ENCODE measurements at regions of chr12 and their contacts with region 1.

Region 1: DNA sequence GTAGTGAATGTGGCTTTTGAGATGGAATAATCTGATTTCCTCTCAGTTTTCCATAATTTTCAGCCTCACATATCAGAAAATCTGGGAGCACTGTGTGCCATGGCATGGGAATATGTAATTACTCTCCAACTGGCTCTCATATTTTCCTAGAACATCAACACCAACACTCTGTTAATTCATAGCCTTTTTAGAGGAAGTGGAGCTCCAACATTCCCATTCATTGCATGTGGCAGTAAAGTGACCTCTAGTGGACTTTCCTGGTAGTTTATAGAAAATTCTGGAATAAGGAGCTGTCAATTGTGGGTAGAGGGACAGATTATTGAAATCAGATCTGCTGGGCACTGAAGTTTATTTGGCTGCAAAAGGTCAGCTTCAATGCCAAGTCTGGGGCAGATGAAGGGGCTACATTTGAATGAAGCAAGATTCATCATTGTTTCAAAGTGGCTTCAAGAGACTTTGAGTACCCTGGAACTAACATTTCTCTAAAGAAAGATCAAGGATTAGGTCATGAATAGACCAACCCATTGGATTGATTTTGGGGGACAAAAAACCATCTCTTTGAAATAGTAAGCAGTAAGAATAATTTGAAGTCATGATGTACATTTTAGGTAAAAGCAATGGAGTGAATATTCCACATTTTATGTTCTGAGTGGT is 23.6 kb upstream of the USP44 start:
- DNase-seq: no peak
- H3K4me3 ChIP-seq: no peak overlapping the region
- CTCF ChIP-seq: peak; percentile 55

Region 2: DNA sequence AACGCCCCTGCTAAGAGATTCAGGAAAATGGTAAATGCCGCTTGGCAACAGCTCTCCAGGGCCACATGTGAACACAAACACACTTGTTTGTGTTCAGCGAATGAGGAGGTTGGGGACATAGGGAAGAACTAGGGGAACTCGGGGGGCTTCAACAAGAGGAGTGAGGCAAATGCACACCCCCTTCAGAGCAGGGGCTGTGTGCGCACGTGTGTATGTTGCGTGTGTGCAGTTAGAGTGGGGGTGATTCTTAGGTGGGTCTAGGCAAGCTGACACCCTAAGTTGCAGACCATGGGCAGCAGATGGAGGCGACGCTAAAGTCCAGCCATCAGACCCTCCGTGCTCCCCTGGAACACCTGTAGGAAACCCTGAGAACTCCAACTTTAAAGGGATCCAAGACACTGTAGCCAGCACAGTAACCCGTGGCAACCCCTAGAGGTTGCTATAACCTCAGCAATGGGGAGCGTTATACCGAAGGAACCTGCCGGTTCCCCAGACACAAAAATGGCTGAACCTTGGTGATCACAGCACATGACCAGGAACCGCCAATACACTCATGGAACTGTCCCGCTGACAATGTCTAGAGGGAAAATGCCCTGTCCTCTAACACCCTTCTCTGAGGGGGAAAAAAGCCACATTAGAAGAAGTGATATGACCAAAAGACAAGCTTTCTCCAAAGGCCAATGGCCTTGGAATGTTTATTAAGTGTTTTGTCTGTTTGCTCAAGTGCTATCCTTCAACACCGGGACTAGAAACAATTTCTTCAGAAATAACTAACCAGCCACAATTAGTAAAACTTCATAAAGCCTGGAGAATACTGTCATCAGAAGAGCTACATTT is 1028.8 kb before region 1 on chr12:
- CTCF ChIA-PET with region 1: interaction called, 25 read pairs
- POLR2A ChIA-PET with region 1: no interaction called
- DNase-seq: no peak
- H3K4me3 ChIP-seq: no peak overlapping the region
- CTCF ChIP-seq: peak; percentile 58

Region 3: DNA sequence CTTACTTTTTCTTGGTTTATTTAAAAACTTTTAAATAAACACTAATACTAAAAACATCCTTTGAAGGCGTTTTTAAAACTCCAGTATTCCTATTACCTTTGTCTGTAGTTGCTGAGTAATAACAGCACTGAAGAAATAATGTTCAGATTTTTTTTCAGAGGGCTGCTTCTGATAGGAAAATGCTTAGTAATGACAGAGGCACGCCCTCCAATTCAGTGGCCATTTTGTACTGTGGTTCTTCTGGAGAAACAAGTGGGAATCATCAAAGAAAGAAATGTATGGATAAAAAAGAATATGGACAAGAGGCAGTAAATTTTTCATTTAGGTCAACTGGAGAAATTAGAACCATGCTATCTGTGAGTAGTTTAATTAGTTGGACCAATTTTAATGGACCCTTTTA is 343.7 kb before region 1 on chr12:
- CTCF ChIA-PET with region 1: no interaction called
- POLR2A ChIA-PET with region 1: no interaction called
- DNase-seq: no peak
- H3K4me3 ChIP-seq: no peak overlapping the region
- CTCF ChIP-seq: no peak

Region 4: GRCh38 chr12:95548539-95549391 is 26.2 kb before region 1 on chr12:
- CTCF ChIA-PET with region 1: interaction called, 22 read pairs
- POLR2A ChIA-PET with region 1: no interaction called
- DNase-seq: no peak
- H3K4me3 ChIP-seq: peak overlapping the region; percentile 56
- CTCF ChIP-seq: no peak

Region 5: GRCh38 chr12:95762123-95762785 is 187.3 kb after region 1 on chr12:
- CTCF ChIA-PET with region 1: no interaction called
- POLR2A ChIA-PET with region 1: no interaction called
- DNase-seq: no peak
- H3K4me3 ChIP-seq: no peak overlapping the region
- CTCF ChIP-seq: no peak

Region 6: GRCh38 chr12:95805864-95806671 is 231.1 kb after region 1 on chr12:
- CTCF ChIA-PET with region 1: interaction called, 29 read pairs
- POLR2A ChIA-PET with region 1: no interaction called
- DNase-seq: peak; percentile 99
- H3K4me3 ChIP-seq: no peak overlapping the region
- CTCF ChIP-seq: no peak

Region 7: DNA sequence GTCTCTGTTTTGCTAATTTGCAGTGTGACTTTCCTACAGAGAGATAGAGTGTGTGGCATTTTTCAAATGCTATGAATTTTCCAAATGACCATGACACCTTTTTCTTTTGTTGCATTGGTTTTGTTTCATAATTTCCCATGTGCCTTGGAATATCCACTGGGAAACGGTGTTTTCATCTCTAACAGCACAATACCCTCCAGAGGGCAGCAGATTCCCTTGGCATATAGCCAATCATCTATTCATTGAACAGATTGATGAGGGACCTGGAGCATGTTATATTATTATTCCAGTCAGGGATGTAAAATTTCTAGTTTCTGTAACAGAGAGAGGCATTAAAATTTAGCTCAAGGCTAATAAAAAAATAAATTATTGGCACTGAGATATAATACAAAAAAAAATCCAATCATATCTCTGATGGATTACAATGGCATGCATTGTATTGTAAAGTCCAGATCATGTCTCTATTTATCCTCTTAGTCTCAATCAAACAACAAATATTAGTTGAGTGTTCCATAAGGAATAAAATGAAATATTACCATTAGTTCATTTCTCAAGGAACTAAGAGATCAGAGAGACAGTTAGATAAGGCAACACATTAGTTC is 245.3 kb after region 1 on chr12:
- CTCF ChIA-PET with region 1: interaction called, 356 read pairs
- POLR2A ChIA-PET with region 1: no interaction called
- DNase-seq: no peak
- H3K4me3 ChIP-seq: no peak overlapping the region
- CTCF ChIP-seq: peak; percentile 51